ENCODE measurements at regions of chr1 and their contacts with region 1.

Region 1: DNA sequence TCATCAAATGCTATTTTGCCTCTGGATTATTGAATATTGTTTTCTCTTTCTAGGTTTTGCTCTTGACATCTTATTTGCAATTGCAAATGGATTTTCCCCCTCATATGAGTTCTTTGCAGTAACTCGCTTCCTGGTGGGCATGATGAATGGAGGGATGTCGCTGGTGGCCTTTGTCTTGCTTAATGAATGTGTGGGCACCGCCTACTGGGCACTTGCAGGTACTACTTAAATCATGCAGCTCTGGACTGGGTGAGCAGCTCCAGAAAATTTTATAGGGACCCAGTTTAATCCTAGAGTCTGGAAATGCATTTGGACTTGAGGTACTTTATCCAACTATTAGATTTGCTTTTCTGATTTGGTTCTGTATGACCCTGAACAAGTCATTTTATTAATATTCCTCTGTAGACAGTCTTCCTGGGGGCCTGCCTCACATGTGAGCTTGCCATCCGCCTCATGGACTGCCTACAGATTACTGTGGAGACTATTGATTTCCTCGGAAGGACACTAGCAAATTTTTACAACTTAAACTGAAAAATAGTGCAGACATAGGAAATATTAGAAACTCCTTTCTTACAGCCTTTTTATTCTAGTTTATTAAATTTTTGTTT is 44.5 kb downstream of the SLC22A15 start:
- DNase-seq: peak in 7 of 9 donors; percentile 7 to 30 (median 25)
- ATAC-seq: peak; percentile 75
- H3K4me3 ChIP-seq: no peak overlapping the region
- H3K4me3 Mint-ChIP-seq: no peak overlapping the region
- H3K27ac ChIP-seq: no peak overlapping the region
- H3K27ac Mint-ChIP-seq: no peak overlapping the region
- H3K4me1 ChIP-seq: no peaks in the 10 kb centered on the region
- H3K4me1 Mint-ChIP-seq: peaks cover 0 to 7% (median 0%) of the 10 kb centered on the region in 7 donors
- H3K27me3 ChIP-seq: no peaks in the 10 kb centered on the region
- H3K27me3 Mint-ChIP-seq: peaks cover 0 to 22% (median 6%) of the 10 kb centered on the region in 5 donors

Region 2: DNA sequence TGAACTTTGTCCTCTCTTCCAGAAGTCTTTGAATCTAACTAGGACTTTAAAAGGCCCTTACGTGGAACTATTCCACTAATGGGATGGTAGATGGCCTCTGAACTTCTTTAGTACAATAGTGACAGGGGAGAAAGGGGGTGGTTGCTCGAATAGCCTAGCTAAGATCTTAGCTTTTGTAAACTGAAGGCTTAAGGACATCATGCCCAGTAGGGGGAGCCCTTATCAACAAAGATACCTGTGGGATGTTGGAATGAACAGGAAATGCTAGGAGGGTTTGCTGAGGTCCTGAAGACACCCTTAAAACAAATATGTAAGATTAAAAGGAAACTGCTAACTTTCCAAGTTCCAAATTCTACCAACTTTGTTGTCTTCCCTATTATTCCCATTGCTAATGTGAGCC is 213.0 kb before region 1 on chr1:
- CTCF ChIA-PET with region 1: no interaction called
- POLR2A ChIA-PET with region 1: no interaction called
- intact Hi-C with region 1: loop called in 1 of 2 experiments (anchors 1 kb)
- DNase-seq: peak in 7 of 9 donors; percentile 8 to 41 (median 31)
- ATAC-seq: peak; percentile 72
- H3K4me3 ChIP-seq: no peak overlapping the region
- H3K4me3 Mint-ChIP-seq: no peak overlapping the region
- H3K27ac ChIP-seq: no peak overlapping the region
- H3K27ac Mint-ChIP-seq: no peak overlapping the region
- H3K4me1 ChIP-seq: no peaks in the 10 kb centered on the region
- H3K4me1 Mint-ChIP-seq: peaks cover 0 to 3% (median 0%) of the 10 kb centered on the region in 7 donors
- H3K27me3 ChIP-seq: peaks cover 0 to 5% of the 10 kb centered on the region in 2 donors
- H3K27me3 Mint-ChIP-seq: peaks cover 17 to 30% (median 25%) of the 10 kb centered on the region in 5 donors